ENCODE measurements at regions of chr5 and their contacts with region 1.

Region 1: GRCh38 chr5:10695055-10695649 is 65.9 kb downstream of the DAP start:
- DNase-seq: peak; percentile 96
- ATAC-seq: peak; percentile 91
- H3K4me3 ChIP-seq: no peak overlapping the region
- H3K27ac ChIP-seq: peak overlapping the region; percentile 69
- H3K4me1 ChIP-seq: peaks cover 39% of the 10 kb centered on the region
- H3K27me3 ChIP-seq: no peaks in the 10 kb centered on the region
- CTCF ChIP-seq: peak; percentile 99

Region 2: DNA sequence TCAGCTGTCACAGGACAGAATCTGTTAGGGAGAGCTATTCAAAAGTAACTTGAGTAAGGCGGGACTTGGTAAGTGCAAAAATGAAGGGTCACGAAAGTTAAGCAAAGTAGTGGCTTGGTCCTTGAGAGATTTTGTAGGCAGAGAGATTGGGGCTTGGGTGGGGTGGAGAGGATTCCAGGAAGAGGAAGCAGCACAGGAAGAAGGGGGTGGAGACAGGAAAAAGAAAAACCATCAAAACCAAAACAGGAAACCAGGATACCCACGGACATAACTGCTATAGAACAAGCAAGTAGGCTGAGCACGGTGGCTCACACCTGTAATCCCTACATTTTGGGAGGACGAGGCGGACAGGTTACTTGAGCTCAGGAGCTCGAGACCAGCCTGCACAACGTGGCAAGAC is 249.8 kb before region 1 on chr5:
- CTCF ChIA-PET with region 1: no interaction called
- POLR2A ChIA-PET with region 1: no interaction called
- intact Hi-C with region 1: no loop called
- DNase-seq: no peak
- ATAC-seq: no peak
- H3K4me3 ChIP-seq: no peak overlapping the region
- H3K27ac ChIP-seq: no peak overlapping the region
- H3K4me1 ChIP-seq: peaks cover 15% of the 10 kb centered on the region
- H3K27me3 ChIP-seq: no peaks in the 10 kb centered on the region
- CTCF ChIP-seq: no peak

Region 3: DNA sequence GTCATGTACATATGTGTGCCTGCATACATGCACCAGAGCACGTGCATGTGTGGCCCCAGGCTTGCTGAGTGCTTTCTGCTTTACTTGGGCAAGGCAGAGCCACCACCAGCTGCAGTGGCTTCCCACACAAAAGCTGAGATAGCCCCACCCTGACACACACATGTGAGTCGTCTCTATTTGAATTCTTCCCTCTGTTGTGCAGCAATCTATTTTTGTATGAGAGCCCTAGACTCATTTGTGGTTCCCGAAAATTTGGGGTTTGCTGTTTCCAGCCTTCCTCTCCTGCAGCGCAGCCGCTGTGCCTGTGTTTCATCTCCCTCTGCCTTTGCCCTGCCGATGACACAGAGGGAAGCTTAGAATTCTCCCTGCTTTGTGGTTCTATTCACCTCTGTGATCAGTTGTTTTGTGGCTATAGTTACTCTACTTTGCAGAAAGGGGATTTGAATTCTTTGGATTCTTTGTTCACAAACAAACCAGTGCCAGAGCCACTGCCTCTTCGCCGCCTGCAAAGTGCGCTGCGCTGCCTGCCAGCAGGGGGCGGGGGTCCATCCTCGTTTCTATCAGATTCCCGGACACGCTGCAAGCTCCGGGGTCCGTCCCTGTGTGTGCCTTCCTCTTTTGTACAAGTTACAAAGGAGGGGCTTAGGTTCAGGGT is 161.7 kb after region 1 on chr5:
- CTCF ChIA-PET with region 1: no interaction called
- POLR2A ChIA-PET with region 1: no interaction called
- intact Hi-C with region 1: loop called (anchors 1 kb)
- DNase-seq: peak; percentile 62
- ATAC-seq: peak; percentile 56
- H3K4me3 ChIP-seq: peak overlapping the region; percentile 40; the same call in 1 of the 2 replicates
- H3K27ac ChIP-seq: no peak overlapping the region
- H3K4me1 ChIP-seq: peaks cover 33% of the 10 kb centered on the region
- H3K27me3 ChIP-seq: no peaks in the 10 kb centered on the region
- CTCF ChIP-seq: peak; percentile 97

Region 4: DNA sequence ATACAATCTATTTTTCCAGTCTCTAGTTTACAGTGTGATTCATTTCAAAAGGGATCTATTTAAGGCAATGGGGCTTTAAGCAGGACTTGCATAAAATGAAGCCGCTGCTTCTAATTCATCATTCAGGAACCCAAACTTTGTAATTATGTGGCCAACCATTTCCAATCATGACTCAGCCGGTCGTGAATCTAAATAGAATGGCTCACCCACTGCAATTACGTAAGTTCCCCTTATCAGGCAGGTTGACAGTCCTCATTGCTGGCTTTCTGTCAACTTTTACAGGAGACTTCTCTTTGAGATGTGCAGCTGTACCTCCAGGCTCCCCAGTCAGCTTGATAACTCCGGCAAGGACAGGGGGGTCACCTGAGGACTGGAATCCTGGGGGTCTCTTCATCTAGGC is 218.7 kb after region 1 on chr5:
- CTCF ChIA-PET with region 1: no interaction called
- POLR2A ChIA-PET with region 1: no interaction called
- intact Hi-C with region 1: loop called (anchors 5 kb)
- DNase-seq: peak; percentile 100
- ATAC-seq: peak; percentile 85
- H3K4me3 ChIP-seq: peak overlapping the region; percentile 37
- H3K27ac ChIP-seq: peak overlapping the region; percentile 80
- H3K4me1 ChIP-seq: peaks cover 34% of the 10 kb centered on the region
- H3K27me3 ChIP-seq: no peaks in the 10 kb centered on the region
- CTCF ChIP-seq: no peak

Region 5: GRCh38 chr5:11046160-11046559 is 351.0 kb after region 1 on chr5:
- CTCF ChIA-PET with region 1: no interaction called
- POLR2A ChIA-PET with region 1: no interaction called
- intact Hi-C with region 1: loop called (anchors 10 kb)
- DNase-seq: peak; percentile 30
- ATAC-seq: peak; percentile 58; the same call in 1 of the 2 replicates
- H3K4me3 ChIP-seq: no peak overlapping the region
- H3K27ac ChIP-seq: no peak overlapping the region
- H3K4me1 ChIP-seq: peaks cover 24% of the 10 kb centered on the region
- H3K27me3 ChIP-seq: no peaks in the 10 kb centered on the region
- CTCF ChIP-seq: 0 out of 2 replicates have a peak, but pooled peaks have one; percentile 28

Region 6: GRCh38 chr5:11110128-11110527 is 415.0 kb after region 1 on chr5:
- CTCF ChIA-PET with region 1: no interaction called
- POLR2A ChIA-PET with region 1: no interaction called
- intact Hi-C with region 1: loop called (anchors 1 kb)
- DNase-seq: peak; percentile 38
- ATAC-seq: no peak
- H3K4me3 ChIP-seq: no peak overlapping the region
- H3K27ac ChIP-seq: no peak overlapping the region
- H3K4me1 ChIP-seq: no peaks in the 10 kb centered on the region
- H3K27me3 ChIP-seq: no peaks in the 10 kb centered on the region
- CTCF ChIP-seq: peak; percentile 52

Region 7: GRCh38 chr5:11182441-11183268 is 487.5 kb after region 1 on chr5:
- CTCF ChIA-PET with region 1: no interaction called
- POLR2A ChIA-PET with region 1: no interaction called
- intact Hi-C with region 1: loop called (anchors 1 kb)
- DNase-seq: peak; percentile 80
- ATAC-seq: peak; percentile 69
- H3K4me3 ChIP-seq: no peak overlapping the region
- H3K27ac ChIP-seq: no peak overlapping the region
- H3K4me1 ChIP-seq: no peaks in the 10 kb centered on the region
- H3K27me3 ChIP-seq: no peaks in the 10 kb centered on the region
- CTCF ChIP-seq: peak; percentile 97

Region 8: DNA sequence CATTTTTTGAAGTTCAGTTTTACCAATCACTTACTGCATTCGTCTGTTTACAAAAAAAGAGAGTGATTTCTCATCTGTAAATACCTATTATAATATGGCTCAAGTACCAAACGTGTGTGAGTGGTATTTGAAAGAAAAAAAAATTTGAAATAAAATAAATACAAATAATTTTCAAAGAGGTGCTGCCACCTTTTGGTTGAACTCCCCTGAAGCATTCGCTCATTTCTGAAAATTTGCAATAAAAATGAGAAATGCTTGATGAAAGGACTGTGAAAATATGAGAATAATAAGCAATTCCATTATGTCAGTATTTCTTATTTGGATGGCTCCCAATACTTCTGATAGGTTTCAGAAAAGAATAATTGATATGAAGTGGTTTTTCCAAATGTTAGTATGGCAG is 799.2 kb after region 1 on chr5:
- CTCF ChIA-PET with region 1: no interaction called
- POLR2A ChIA-PET with region 1: no interaction called
- intact Hi-C with region 1: loop called (anchors 10 kb)
- DNase-seq: peak; percentile 52
- ATAC-seq: no peak
- H3K4me3 ChIP-seq: no peak overlapping the region
- H3K27ac ChIP-seq: no peak overlapping the region
- H3K4me1 ChIP-seq: no peaks in the 10 kb centered on the region
- H3K27me3 ChIP-seq: no peaks in the 10 kb centered on the region
- CTCF ChIP-seq: peak; percentile 78